ENCODE measurements at regions of chr14 and their contacts with region 1.

Region 1: GRCh38 chr14:65211341-65211987 is 109.1 kb upstream of the MAX start:
- DNase-seq: peak in 1 of 4 experiments; percentile 16
- ATAC-seq: peak; percentile 83
- H3K4me3 ChIP-seq: no peak overlapping the region
- H3K27ac ChIP-seq: no peak overlapping the region
- H3K4me1 ChIP-seq: peaks cover 2 to 10% of the 10 kb centered on the region in 2 experiments; a peak in 4 of 5 replicates
- H3K27me3 ChIP-seq: no peaks in the 10 kb centered on the region
- CTCF ChIP-seq: no peak
- EP300 ChIP-seq: no peak; the same call in 1 of the 2 replicates
- POLR2A ChIP-seq: no peak
- RAD21 ChIP-seq: no peak

Region 2: DNA sequence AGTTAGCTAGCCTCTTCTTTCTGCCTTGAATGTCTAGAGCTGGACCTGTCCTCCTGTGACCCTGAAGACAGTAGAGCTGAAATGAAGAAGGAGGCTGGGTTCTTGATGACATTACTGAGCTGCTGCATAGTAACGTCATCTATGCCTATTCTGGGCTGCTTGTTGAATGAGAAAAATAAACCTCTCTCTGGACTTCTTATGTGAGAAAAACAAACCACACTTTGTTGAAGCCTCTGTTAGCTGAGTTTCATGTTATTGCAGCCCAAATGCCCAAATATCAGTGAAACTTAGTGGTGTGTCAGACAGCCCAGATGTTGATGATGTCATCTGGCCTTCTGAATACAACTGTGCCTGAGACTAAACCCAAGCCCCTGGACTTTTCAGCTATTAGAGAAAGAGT is 42.1 kb before region 1 on chr14:
- CTCF ChIA-PET with region 1: interaction called, 4 read pairs
- POLR2A ChIA-PET with region 1: no interaction called
- in situ Hi-C with region 1: no loop called
- intact Hi-C with region 1: loop called (anchors 5 kb)
- DNase-seq: no peak
- ATAC-seq: no peak
- H3K4me3 ChIP-seq: no peak overlapping the region
- H3K27ac ChIP-seq: no peak overlapping the region
- H3K4me1 ChIP-seq: peaks cover 0 to 6% of the 10 kb centered on the region in 2 experiments; a peak in 2 of 5 replicates
- H3K27me3 ChIP-seq: peaks cover 0 to 6% of the 10 kb centered on the region in 2 experiments; a peak in 1 of 5 replicates
- CTCF ChIP-seq: no peak
- EP300 ChIP-seq: no peak
- POLR2A ChIP-seq: no peak
- RAD21 ChIP-seq: no peak

Measured in K562 (cell line).